Activated CD4-positive, alpha-beta memory T cell treated with anti-CD3 and anti-CD28 coated beads for 36 hours (primary cell): ENCODE measurements at regions of chr5 and their contacts with region 1.

Region 1: GRCh38 chr5:111278845-111279504 is 54.8 kb downstream of the CAMK4 start:
- DNase-seq: peak; percentile 92
- H3K4me3 Mint-ChIP-seq: no peak overlapping the region
- H3K27ac Mint-ChIP-seq: no peak overlapping the region
- H3K4me1 Mint-ChIP-seq: peaks cover 60% of the 10 kb centered on the region
- H3K27me3 Mint-ChIP-seq: no peaks in the 10 kb centered on the region

Region 2: DNA sequence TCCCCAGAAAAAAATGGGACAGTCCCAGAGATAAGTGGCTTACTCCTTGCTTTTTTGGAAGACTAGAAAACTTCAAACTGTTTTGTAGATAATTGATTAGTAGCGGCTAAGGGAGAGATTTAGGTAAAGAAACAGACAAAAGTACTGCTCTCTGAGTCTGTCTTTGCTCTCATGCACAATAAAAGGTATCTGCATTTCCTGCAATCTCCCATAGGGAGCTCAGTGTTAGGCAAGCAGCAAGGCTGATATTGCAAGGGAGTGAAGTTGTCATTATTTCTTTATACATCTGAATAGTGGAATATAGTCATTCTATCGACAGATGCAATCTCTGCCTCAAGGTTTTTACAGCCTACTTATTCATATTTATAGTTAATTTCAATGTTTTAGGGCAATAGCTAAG is 109.7 kb before region 1 on chr5:
- CTCF ChIA-PET with region 1: interaction called, 212 read pairs
- POLR2A ChIA-PET with region 1: no interaction called
- intact Hi-C with region 1: no loop called
- DNase-seq: no peak
- H3K4me3 Mint-ChIP-seq: no peak overlapping the region
- H3K27ac Mint-ChIP-seq: no peak overlapping the region
- H3K4me1 Mint-ChIP-seq: no peaks in the 10 kb centered on the region
- H3K27me3 Mint-ChIP-seq: no peaks in the 10 kb centered on the region

Region 3: DNA sequence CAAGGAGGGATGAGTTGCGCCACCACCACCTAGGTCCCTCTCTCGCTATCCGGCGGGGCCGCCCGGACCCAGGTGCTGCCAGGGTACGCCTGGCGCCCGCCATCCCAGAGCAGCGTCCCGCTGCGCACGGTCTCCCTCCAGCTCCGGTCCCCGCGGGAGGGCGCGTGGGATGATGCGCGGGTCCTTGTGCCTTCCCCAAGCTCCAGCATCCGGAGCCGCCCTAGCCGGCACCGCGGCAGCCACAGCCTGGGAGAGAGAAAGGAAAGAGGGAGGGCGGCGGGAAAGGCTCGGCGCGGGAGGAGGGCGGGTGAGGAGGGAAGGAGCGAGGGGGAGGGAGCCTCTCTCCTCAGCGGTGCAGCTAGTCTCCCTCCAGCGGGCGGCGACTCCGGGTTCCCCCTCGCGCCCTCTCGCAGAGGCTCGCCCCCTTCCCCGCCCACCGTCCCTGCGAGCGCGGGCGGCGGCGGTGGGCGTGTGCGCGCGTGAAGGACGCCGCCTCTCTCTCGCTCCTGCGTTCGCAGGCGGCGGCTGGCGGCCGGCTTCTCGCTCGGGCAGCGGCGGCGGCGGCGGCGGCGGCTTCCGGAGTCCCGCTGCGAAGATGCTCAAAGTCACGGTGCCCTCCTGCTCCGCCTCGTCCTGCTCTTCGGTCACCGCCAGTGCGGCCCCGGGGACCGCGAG is 54.9 kb before region 1 on chr5 and contains the start of gene CAMK4:
- CTCF ChIA-PET with region 1: interaction called, 39 read pairs
- POLR2A ChIA-PET with region 1: no interaction called
- intact Hi-C with region 1: loop called (anchors 1 kb)
- DNase-seq: peak; percentile 77
- H3K4me3 Mint-ChIP-seq: peak within 1 kb of the TSS; percentile 89
- H3K27ac Mint-ChIP-seq: peak within 1 kb of the TSS; percentile 90
- H3K4me1 Mint-ChIP-seq: peaks cover 34% of the 10 kb centered on the region
- H3K27me3 Mint-ChIP-seq: no peaks in the 10 kb centered on the region
- total RNA-seq, gene CAMK4: 33.3 to 36.5 TPM

Region 4: GRCh38 chr5:111237470-111237869 is 41.5 kb before region 1 on chr5:
- CTCF ChIA-PET with region 1: interaction called, 21 read pairs
- POLR2A ChIA-PET with region 1: no interaction called
- intact Hi-C with region 1: no loop called
- DNase-seq: no peak
- H3K4me3 Mint-ChIP-seq: peak overlapping the region; percentile 61
- H3K27ac Mint-ChIP-seq: peak overlapping the region; percentile 83
- H3K4me1 Mint-ChIP-seq: peaks cover 92% of the 10 kb centered on the region
- H3K27me3 Mint-ChIP-seq: no peaks in the 10 kb centered on the region

Region 5: GRCh38 chr5:111266491-111266890 is 12.5 kb before region 1 on chr5:
- CTCF ChIA-PET with region 1: interaction called, 23 read pairs
- POLR2A ChIA-PET with region 1: interaction called, 3 read pairs
- intact Hi-C with region 1: no loop called
- DNase-seq: no peak
- H3K4me3 Mint-ChIP-seq: no peak overlapping the region
- H3K27ac Mint-ChIP-seq: no peak overlapping the region
- H3K4me1 Mint-ChIP-seq: peaks cover 45% of the 10 kb centered on the region
- H3K27me3 Mint-ChIP-seq: no peaks in the 10 kb centered on the region

Region 6: DNA sequence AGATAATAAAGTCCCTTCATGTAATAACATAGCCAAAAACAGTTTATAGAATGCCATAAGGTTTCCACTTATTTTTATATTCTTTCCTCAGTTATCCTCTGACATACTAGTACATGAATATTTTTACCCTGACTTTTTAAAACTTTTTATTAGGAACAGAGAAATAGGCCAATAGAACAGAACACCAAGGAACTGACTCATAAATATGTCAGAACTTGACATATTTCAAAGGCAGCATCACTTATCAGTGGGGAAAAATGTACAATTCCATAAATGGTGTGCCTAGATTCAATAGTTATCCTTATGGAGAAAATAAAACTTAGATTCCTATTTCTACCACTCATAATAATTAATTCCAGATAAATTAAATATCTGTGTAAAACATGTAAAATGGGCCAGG is 224.0 kb after region 1 on chr5:
- CTCF ChIA-PET with region 1: no interaction called
- POLR2A ChIA-PET with region 1: no interaction called
- intact Hi-C with region 1: no loop called
- DNase-seq: no peak
- H3K4me3 Mint-ChIP-seq: no peak overlapping the region
- H3K27ac Mint-ChIP-seq: no peak overlapping the region
- H3K4me1 Mint-ChIP-seq: peaks cover 21% of the 10 kb centered on the region
- H3K27me3 Mint-ChIP-seq: no peaks in the 10 kb centered on the region